GM10248 (cell line): ENCODE measurements at regions of chr2 and their contacts with region 1.

Region 1: DNA sequence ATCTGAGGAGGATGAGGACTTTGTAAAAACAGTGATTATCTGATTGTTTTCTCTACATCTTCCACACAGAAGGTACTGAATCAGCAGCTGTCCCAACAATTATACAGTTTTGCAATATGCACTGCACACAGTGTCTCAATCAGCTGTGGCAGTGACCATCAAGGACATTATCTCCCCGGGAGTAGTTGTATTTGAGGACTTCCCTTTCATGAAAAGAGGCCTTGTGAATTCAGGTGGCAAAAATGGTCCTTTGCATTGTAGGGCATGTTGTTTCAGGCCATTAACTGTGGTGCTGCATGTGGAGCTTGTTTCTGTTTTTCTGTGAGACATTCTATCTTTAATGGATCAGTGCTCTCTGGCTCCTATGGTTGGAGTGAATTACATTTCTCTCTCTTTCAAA is 779.4 kb upstream of the FSHR start:
- DNase-seq: no peak
- CTCF ChIP-seq: no peak

Region 2: DNA sequence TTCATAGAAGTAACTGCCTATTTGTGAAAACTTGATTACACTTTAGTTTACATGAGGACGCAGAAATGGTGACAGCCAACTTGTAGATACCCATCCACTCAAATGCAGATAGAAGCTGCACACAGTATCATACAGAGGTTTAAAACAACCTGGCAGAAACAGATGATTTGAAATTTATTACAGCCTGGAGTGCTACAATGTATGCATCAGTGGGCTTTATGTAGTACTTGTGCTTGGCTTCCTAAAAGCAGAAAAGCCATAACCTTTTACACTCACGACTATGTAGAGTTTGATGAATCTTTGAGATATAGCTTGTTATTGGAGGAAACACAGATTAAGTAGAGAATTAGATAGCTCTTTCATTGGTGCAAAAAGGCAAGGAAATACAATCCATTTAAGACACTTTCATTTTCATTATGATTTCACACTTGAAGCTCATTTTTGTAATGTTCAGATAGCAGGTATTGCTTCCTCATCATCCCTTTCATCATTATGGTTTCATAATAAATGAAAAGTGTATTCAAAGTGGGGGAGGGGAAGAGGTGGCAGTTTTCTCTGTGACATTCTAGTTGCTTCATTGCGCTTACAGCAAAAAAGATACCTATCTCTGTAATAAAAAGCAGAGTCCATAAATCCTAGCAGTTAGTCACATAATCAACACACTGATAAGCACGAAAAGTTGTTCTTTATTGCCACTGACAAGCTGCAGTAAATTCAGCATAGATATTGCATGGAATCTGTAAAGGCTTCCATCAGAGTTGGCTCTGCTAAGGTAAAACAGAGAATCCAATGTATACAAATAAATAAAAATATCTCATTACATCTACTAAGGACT is 10.4 kb after region 1 on chr2:
- CTCF ChIA-PET with region 1: interaction called, 12 read pairs
- POLR2A ChIA-PET with region 1: no interaction called
- DNase-seq: no peak
- CTCF ChIP-seq: no peak